Naive thymus-derived CD4-positive, alpha-beta T cell (primary cell): ENCODE measurements at regions of chr12 and their contacts with region 1.

Region 1: GRCh38 chr12:48105862-48106680 is at the start of gene SENP1:
- DNase-seq: peak; percentile 81 to 93 (median 90)
- ATAC-seq: peak; percentile 88
- H3K4me3 ChIP-seq: peak within 1 kb of the TSS; percentile 89
- H3K4me3 Mint-ChIP-seq: peak within 1 kb of the TSS; percentile 88 to 96 (median 92)
- H3K27ac ChIP-seq: peak within 1 kb of the TSS; percentile 93
- H3K27ac Mint-ChIP-seq: peak within 1 kb of the TSS; percentile 90 to 100 (median 95)
- H3K4me1 ChIP-seq: peaks cover 17 to 25% of the 10 kb centered on the region in 2 donors
- H3K4me1 Mint-ChIP-seq: peaks cover 33 to 65% (median 58%) of the 10 kb centered on the region in 7 donors
- H3K27me3 ChIP-seq: no peaks in the 10 kb centered on the region
- H3K27me3 Mint-ChIP-seq: peaks cover 0 to 8% (median 0%) of the 10 kb centered on the region in 5 donors
- total RNA-seq, gene SENP1: 16.9 to 41.9 (median 31.5) TPM

Region 2: GRCh38 chr12:47882781-47883546 is 223.1 kb before region 1 on chr12:
- CTCF ChIA-PET with region 1: no interaction called
- POLR2A ChIA-PET with region 1: no interaction called
- intact Hi-C with region 1: loop called in 1 of 2 experiments (anchors 5 kb)
- DNase-seq: peak in 7 of 9 donors; percentile 30 to 60 (median 55)
- ATAC-seq: peak; percentile 71
- H3K4me3 ChIP-seq: peak overlapping the region; percentile 73
- H3K4me3 Mint-ChIP-seq: peak overlapping the region; percentile 84 to 95 (median 90)
- H3K27ac ChIP-seq: peak overlapping the region; percentile 50
- H3K27ac Mint-ChIP-seq: peak overlapping the region; percentile 72 to 99 (median 95)
- H3K4me1 ChIP-seq: peaks cover 14 to 38% of the 10 kb centered on the region in 2 donors
- H3K4me1 Mint-ChIP-seq: peaks cover 33 to 82% (median 54%) of the 10 kb centered on the region in 7 donors
- H3K27me3 ChIP-seq: no peaks in the 10 kb centered on the region
- H3K27me3 Mint-ChIP-seq: no peaks in the 10 kb centered on the region

Region 3: GRCh38 chr12:48077111-48077510 is 29.0 kb before region 1 on chr12:
- CTCF ChIA-PET with region 1: no interaction called
- POLR2A ChIA-PET with region 1: interaction called, 5 read pairs
- intact Hi-C with region 1: loop called in 1 of 2 experiments (anchors 1 kb)
- DNase-seq: no peak
- ATAC-seq: no peak
- H3K4me3 ChIP-seq: no peak overlapping the region
- H3K4me3 Mint-ChIP-seq: no peak overlapping the region
- H3K27ac ChIP-seq: no peak overlapping the region
- H3K27ac Mint-ChIP-seq: no peak overlapping the region
- H3K4me1 ChIP-seq: no peaks in the 10 kb centered on the region
- H3K4me1 Mint-ChIP-seq: peaks cover 0 to 5% (median 0%) of the 10 kb centered on the region in 7 donors
- H3K27me3 ChIP-seq: no peaks in the 10 kb centered on the region
- H3K27me3 Mint-ChIP-seq: no peaks in the 10 kb centered on the region

Region 4: DNA sequence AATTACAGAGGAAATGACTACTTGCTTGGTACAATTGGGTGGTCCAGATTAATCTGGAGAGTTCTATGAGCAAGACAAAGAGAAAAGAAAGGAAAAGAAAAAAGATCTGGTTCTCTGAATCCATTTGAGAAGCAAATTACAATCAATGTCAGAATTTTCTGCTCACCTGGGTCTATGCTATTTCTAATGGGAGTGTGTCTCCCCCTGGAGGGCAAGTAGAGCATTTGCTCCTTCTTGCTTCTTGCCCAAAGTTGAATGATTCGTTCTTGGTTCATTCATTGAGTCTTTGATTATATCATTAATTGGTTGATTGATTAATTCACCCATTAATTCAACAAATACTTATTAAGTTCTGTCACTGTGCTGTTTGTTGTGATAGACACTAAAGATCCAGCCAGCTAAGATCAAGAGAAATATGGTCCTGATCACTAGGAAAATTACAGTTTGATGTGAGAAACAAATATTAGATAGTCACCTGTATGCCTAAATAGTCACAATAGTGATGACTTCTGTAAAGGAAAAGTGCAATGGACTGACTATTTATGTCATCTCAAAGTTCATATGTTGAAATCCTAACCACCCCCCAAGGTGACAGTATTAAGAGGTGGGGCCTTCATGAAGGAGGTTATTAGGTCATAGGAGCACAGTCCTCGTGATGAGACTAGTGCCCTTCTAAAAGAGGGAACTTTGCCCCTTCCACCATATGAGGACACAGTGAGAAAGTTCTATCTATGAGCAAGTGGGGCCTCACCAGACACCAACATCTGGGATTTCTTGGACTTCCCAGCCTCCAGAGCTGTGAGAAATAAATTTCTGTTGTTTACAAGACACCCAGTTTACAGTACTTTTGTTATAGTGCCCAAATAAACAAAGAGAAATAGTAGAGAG is 59.3 kb after region 1 on chr12:
- CTCF ChIA-PET with region 1: interaction called, 6 read pairs
- POLR2A ChIA-PET with region 1: interaction called, 4 read pairs
- intact Hi-C with region 1: loop called (anchors 2 kb)
- DNase-seq: peak in 7 of 9 donors; percentile 54 to 77 (median 70)
- ATAC-seq: peak; percentile 87
- H3K4me3 ChIP-seq: no peak overlapping the region
- H3K4me3 Mint-ChIP-seq: no peak overlapping the region
- H3K27ac ChIP-seq: no peak overlapping the region
- H3K27ac Mint-ChIP-seq: no peak overlapping the region
- H3K4me1 ChIP-seq: no peaks in the 10 kb centered on the region
- H3K4me1 Mint-ChIP-seq: peaks cover 2 to 16% (median 14%) of the 10 kb centered on the region in 7 donors
- H3K27me3 ChIP-seq: no peaks in the 10 kb centered on the region
- H3K27me3 Mint-ChIP-seq: peaks cover 0 to 33% (median 12%) of the 10 kb centered on the region in 5 donors

Region 5: DNA sequence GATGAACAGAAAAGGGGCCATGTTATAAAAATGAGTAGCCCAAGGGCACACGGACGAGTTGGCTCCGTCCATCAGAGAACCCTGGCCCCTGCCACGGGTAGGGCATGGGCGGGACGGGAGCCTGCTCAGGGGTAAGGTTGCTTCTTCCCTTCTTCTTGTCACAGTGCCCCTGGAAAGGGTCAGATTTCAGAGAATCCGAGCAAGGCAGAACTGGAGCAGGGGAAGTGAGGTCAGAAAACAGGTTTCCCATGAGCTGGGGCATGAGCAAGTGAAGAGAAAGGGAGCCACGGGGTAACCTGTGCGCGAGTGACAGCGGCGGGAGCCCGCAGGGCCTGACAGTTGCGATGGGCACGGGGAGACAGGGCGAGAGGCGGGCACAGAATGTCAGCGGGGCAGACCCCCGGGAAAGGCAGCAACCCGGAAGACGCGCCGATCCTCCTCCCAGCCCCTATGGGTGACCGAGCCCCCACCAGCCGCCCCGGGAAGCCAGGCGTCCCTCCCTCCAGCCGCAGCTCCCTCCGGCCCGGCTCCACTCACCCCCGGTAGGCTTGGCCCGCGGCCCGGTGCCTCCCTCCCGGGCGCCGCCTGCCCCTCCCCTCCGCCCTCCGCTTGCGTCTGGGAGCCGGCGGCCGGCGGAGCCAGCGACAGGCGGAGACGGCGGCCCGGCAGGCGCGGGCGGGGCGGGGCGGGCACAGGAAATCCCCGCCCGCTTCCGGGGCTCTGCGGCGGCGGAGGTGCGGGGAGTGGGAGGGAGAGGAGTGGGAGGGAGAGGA is 244.4 kb after region 1 on chr12 and contains the start of gene ZNF641:
- CTCF ChIA-PET with region 1: no interaction called
- POLR2A ChIA-PET with region 1: no interaction called
- intact Hi-C with region 1: loop called (anchors 2 to 5 kb)
- DNase-seq: peak; percentile 74 to 85 (median 84)
- ATAC-seq: peak; percentile 95
- H3K4me3 ChIP-seq: peak within 1 kb of the TSS; percentile 77
- H3K4me3 Mint-ChIP-seq: peak within 1 kb of the TSS; percentile 91 to 99 (median 96)
- H3K27ac ChIP-seq: peak within 1 kb of the TSS; percentile 92
- H3K27ac Mint-ChIP-seq: peak within 1 kb of the TSS; percentile 89 to 99 (median 96)
- H3K4me1 ChIP-seq: peaks cover 14 to 25% of the 10 kb centered on the region in 2 donors
- H3K4me1 Mint-ChIP-seq: peaks cover 25 to 61% (median 49%) of the 10 kb centered on the region in 7 donors
- H3K27me3 ChIP-seq: peaks cover 0 to 5% of the 10 kb centered on the region in 2 donors
- H3K27me3 Mint-ChIP-seq: peaks cover 0 to 12% (median 0%) of the 10 kb centered on the region in 5 donors
- total RNA-seq, gene ZNF641: 22.1 to 50.3 (median 30.1) TPM